Activated CD8-positive, alpha-beta T cell treated with anti-CD3 and anti-CD28 coated beads for 36 hours (primary cell): ENCODE measurements at regions of chr1 and their contacts with region 1.

Region 1: GRCh38 chr1:206912445-206913095 is 9.2 kb downstream of the FCMR start:
- DNase-seq: peak; percentile 77
- ATAC-seq: peak; percentile 45
- H3K4me3 Mint-ChIP-seq: no peak overlapping the region
- H3K27ac Mint-ChIP-seq: peak overlapping the region; percentile 63
- H3K4me1 Mint-ChIP-seq: peaks cover 86% of the 10 kb centered on the region
- H3K27me3 Mint-ChIP-seq: no peaks in the 10 kb centered on the region
- CTCF ChIP-seq: peak; percentile 80

Region 2: GRCh38 chr1:206646504-206646903 is 266.1 kb before region 1 on chr1:
- CTCF ChIA-PET with region 1: no interaction called
- POLR2A ChIA-PET with region 1: no interaction called
- intact Hi-C with region 1: no loop called
- DNase-seq: no peak
- ATAC-seq: no peak
- H3K4me3 Mint-ChIP-seq: no peak overlapping the region
- H3K27ac Mint-ChIP-seq: no peak overlapping the region
- H3K4me1 Mint-ChIP-seq: peaks cover 2% of the 10 kb centered on the region
- H3K27me3 Mint-ChIP-seq: no peaks in the 10 kb centered on the region
- CTCF ChIP-seq: no peak

Region 3: DNA sequence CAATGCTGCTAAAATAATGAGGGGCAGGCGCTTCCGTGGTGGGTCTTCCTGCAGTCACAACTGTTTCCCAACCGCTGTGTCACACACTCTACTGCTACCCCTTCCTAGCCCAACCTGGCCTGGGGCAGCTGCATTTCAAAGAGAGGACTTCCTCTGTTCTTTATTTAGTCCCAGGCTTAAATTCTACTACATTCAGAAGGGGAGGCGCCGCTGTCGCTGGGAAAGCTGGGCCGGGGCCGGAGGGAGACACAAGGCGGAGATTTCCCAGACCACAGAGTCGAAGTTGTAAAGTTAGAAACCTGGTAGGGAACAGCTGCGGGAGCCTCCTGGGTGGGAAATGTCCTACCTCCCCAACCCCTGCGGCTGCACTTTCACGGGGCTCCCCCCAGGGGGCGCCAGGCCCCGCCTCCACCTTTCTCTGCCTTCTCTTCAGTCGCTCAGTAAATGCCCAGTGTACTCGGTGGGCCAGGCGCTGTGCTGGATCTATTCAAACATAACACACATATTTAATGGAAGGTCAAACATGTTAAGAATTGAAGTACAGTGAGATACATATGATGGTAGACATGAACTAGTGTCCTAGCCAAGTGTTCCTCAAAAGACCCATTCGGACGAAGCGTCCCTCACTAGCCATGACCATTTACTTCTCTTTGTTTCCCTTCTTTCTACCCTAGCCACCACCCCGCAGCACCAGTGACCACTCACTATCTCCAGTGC is 254.1 kb before region 1 on chr1:
- CTCF ChIA-PET with region 1: interaction called, 15 read pairs
- POLR2A ChIA-PET with region 1: no interaction called
- intact Hi-C with region 1: no loop called
- DNase-seq: peak; percentile 67
- ATAC-seq: peak; percentile 84
- H3K4me3 Mint-ChIP-seq: no peak overlapping the region
- H3K27ac Mint-ChIP-seq: peak overlapping the region; percentile 42
- H3K4me1 Mint-ChIP-seq: peaks cover 29% of the 10 kb centered on the region
- H3K27me3 Mint-ChIP-seq: peaks cover 31% of the 10 kb centered on the region
- CTCF ChIP-seq: peak; percentile 99

Region 4: GRCh38 chr1:206766251-206766856 is 146.2 kb before region 1 on chr1:
- CTCF ChIA-PET with region 1: interaction called, 21 read pairs
- POLR2A ChIA-PET with region 1: interaction called, 3 read pairs
- intact Hi-C with region 1: no loop called
- DNase-seq: peak; percentile 87
- ATAC-seq: peak; percentile 75
- H3K4me3 Mint-ChIP-seq: peak overlapping the region; percentile 47
- H3K27ac Mint-ChIP-seq: peak overlapping the region; percentile 65
- H3K4me1 Mint-ChIP-seq: peaks cover 65% of the 10 kb centered on the region
- H3K27me3 Mint-ChIP-seq: peaks cover 3% of the 10 kb centered on the region
- CTCF ChIP-seq: no peak

Region 5: GRCh38 chr1:206846487-206846886 is 66.1 kb before region 1 on chr1:
- CTCF ChIA-PET with region 1: interaction called, 14 read pairs
- POLR2A ChIA-PET with region 1: no interaction called
- intact Hi-C with region 1: no loop called
- DNase-seq: no peak
- ATAC-seq: no peak
- H3K4me3 Mint-ChIP-seq: no peak overlapping the region
- H3K27ac Mint-ChIP-seq: no peak overlapping the region
- H3K4me1 Mint-ChIP-seq: no peaks in the 10 kb centered on the region
- H3K27me3 Mint-ChIP-seq: no peaks in the 10 kb centered on the region
- CTCF ChIP-seq: no peak

Region 6: DNA sequence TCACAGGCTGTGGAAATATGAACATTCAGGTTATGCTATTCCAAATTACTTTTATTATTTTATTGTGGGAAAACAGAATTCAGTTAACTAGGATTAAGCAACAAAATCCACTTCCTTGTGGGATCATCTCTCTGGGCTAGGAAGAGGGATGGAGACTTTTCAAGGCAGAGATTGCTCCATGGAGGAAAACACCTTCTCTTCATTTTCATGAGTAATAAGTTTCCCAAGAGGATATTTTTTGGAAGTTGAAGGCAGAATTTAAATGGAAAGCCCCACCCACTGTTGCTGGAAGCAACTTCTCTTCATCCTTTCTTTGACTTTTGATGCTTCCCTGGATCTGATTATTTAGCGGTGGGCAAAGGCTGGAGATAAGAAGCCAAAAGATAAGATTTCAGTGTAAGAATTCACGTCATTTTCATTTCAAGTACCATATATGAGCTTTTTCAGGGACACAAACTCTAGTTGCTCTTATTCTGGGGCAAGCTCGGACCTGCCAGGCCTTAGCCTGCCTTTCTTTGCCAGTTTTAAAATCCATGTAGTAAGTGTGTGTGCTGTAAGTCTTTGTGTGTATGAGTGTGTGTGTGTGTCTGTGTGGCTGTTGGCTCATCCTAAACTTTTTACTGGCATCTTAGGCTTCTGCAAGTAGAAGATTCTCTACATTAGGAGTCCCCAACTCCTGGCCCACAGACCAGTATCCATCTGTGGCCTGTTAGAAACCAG is 27.1 kb before region 1 on chr1:
- CTCF ChIA-PET with region 1: interaction called, 25 read pairs
- POLR2A ChIA-PET with region 1: no interaction called
- intact Hi-C with region 1: no loop called
- DNase-seq: no peak
- ATAC-seq: no peak
- H3K4me3 Mint-ChIP-seq: no peak overlapping the region
- H3K27ac Mint-ChIP-seq: no peak overlapping the region
- H3K4me1 Mint-ChIP-seq: peaks cover 18% of the 10 kb centered on the region
- H3K27me3 Mint-ChIP-seq: no peaks in the 10 kb centered on the region
- CTCF ChIP-seq: no peak

Region 7: GRCh38 chr1:206941858-206942387 is 29.4 kb after region 1 on chr1:
- CTCF ChIA-PET with region 1: interaction called, 289 read pairs
- POLR2A ChIA-PET with region 1: interaction called, 3 read pairs
- intact Hi-C with region 1: no loop called
- DNase-seq: no peak
- ATAC-seq: no peak
- H3K4me3 Mint-ChIP-seq: no peak overlapping the region
- H3K27ac Mint-ChIP-seq: no peak overlapping the region
- H3K4me1 Mint-ChIP-seq: no peaks in the 10 kb centered on the region
- H3K27me3 Mint-ChIP-seq: peaks cover 2% of the 10 kb centered on the region
- CTCF ChIP-seq: no peak